T-cell (primary cell): ENCODE measurements at regions of chr1 and their contacts with region 1.

Region 1: GRCh38 chr1:39973503-39974135 is 18.7 kb downstream of the MFSD2A start:
- DNase-seq: peak in 33 of 35 experiments; percentile 41 to 85 (median 65)
- ATAC-seq: peak; percentile 65 to 84 (median 72)
- H3K4me3 ChIP-seq: no peak overlapping the region
- H3K4me3 Mint-ChIP-seq: no peak overlapping the region
- H3K27ac ChIP-seq: no peak overlapping the region
- H3K27ac Mint-ChIP-seq: peak overlapping the region in 1 of 2 donors; percentile 21
- H3K4me1 ChIP-seq: peaks cover 0 to 4% of the 10 kb centered on the region in 2 experiments
- H3K4me1 Mint-ChIP-seq: peaks cover 0 to 5% (median 5%) of the 10 kb centered on the region in 3 donors
- H3K27me3 ChIP-seq: no peaks in the 10 kb centered on the region
- H3K27me3 Mint-ChIP-seq: no peaks in the 10 kb centered on the region

Region 2: GRCh38 chr1:39919545-39919944 is 54.1 kb before region 1 on chr1:
- CTCF ChIA-PET with region 1: interaction called, 15 to 38 read pairs
- POLR2A ChIA-PET with region 1: interaction called in 1 of 2 experiments, 4 read pairs
- DNase-seq: peak in 26 of 35 experiments; percentile 2 to 80 (median 24)
- ATAC-seq: peak; percentile 91 to 98 (median 94)
- H3K4me3 ChIP-seq: no peak overlapping the region
- H3K4me3 Mint-ChIP-seq: no peak overlapping the region
- H3K27ac ChIP-seq: no peak overlapping the region
- H3K27ac Mint-ChIP-seq: no peak overlapping the region
- H3K4me1 ChIP-seq: no peaks in the 10 kb centered on the region
- H3K4me1 Mint-ChIP-seq: peaks cover 0 to 2% (median 0%) of the 10 kb centered on the region in 3 donors
- H3K27me3 ChIP-seq: peaks cover 0 to 20% of the 10 kb centered on the region in 2 experiments
- H3K27me3 Mint-ChIP-seq: peaks cover 4 to 5% of the 10 kb centered on the region in 2 donors

Region 3: GRCh38 chr1:40059338-40059959 is 85.8 kb after region 1 on chr1:
- CTCF ChIA-PET with region 1: interaction called in 1 of 2 experiments, 11 read pairs
- POLR2A ChIA-PET with region 1: no interaction called
- DNase-seq: peak in 5 of 35 experiments; percentile 12 to 64 (median 27)
- ATAC-seq: peak; percentile 74 to 90 (median 86)
- H3K4me3 ChIP-seq: peak overlapping the region in 1 of 2 donors; percentile 35
- H3K4me3 Mint-ChIP-seq: peak overlapping the region; percentile 57 to 78 (median 63)
- H3K27ac ChIP-seq: peak overlapping the region; percentile 54
- H3K27ac Mint-ChIP-seq: peak overlapping the region; percentile 87 to 91
- H3K4me1 ChIP-seq: peaks cover 77 to 83% of the 10 kb centered on the region in 2 experiments
- H3K4me1 Mint-ChIP-seq: peaks cover 93 to 95% (median 94%) of the 10 kb centered on the region in 3 donors
- H3K27me3 ChIP-seq: no peaks in the 10 kb centered on the region
- H3K27me3 Mint-ChIP-seq: no peaks in the 10 kb centered on the region